T-cell (primary cell): ENCODE measurements at regions of chr16 and their contacts with region 1.

Region 1: DNA sequence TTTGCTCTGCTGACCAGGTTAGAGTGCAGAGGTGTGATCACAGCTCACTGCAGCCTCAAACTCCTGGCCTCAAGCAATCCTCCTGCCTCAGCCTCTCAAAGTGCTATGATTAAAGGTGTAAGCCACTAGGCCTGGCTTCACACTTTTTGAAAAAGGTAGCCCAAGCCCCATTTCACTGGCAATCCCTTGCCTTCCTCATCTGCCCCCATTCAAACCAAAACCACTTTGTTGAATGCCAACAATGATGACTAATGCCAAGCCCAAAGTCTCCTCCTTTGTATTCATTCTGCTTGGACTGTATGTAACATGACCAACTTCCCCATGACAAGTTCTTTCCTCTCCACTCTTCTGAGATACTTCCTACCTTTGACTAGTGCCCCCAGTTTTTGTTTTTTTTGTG is 33.1 kb downstream of the N4BP1 start:
- DNase-seq: no peak
- ATAC-seq: peak in 1 of 4 experiments; percentile 40
- H3K4me3 ChIP-seq: no peak overlapping the region
- H3K4me3 Mint-ChIP-seq: peak overlapping the region in 1 of 3 donors; percentile 49
- H3K27ac ChIP-seq: no peak overlapping the region
- H3K27ac Mint-ChIP-seq: peak overlapping the region; percentile 2 to 29
- H3K4me1 ChIP-seq: peaks cover 17 to 19% of the 10 kb centered on the region in 2 experiments
- H3K4me1 Mint-ChIP-seq: peaks cover 64 to 74% (median 72%) of the 10 kb centered on the region in 3 donors
- H3K27me3 ChIP-seq: no peaks in the 10 kb centered on the region
- H3K27me3 Mint-ChIP-seq: no peaks in the 10 kb centered on the region

Region 2: GRCh38 chr16:48117217-48118105 is 459.5 kb before region 1 on chr16:
- CTCF ChIA-PET with region 1: no interaction called
- POLR2A ChIA-PET with region 1: no interaction called
- DNase-seq: peak in 32 of 35 experiments; percentile 5 to 63 (median 34)
- ATAC-seq: peak; percentile 35 to 61 (median 42)
- H3K4me3 ChIP-seq: no peak overlapping the region
- H3K4me3 Mint-ChIP-seq: no peak overlapping the region
- H3K27ac ChIP-seq: no peak overlapping the region
- H3K27ac Mint-ChIP-seq: no peak overlapping the region
- H3K4me1 ChIP-seq: no peaks in the 10 kb centered on the region
- H3K4me1 Mint-ChIP-seq: no peaks in the 10 kb centered on the region
- H3K27me3 ChIP-seq: peaks cover 0 to 42% of the 10 kb centered on the region in 2 experiments
- H3K27me3 Mint-ChIP-seq: peaks cover 5 to 8% of the 10 kb centered on the region in 2 donors

Region 3: GRCh38 chr16:48478396-48478795 is 98.5 kb before region 1 on chr16:
- CTCF ChIA-PET with region 1: interaction called in 1 of 2 experiments, 10 read pairs
- POLR2A ChIA-PET with region 1: no interaction called
- DNase-seq: no peak
- ATAC-seq: no peak
- H3K4me3 ChIP-seq: no peak overlapping the region
- H3K4me3 Mint-ChIP-seq: no peak overlapping the region
- H3K27ac ChIP-seq: no peak overlapping the region
- H3K27ac Mint-ChIP-seq: no peak overlapping the region
- H3K4me1 ChIP-seq: no peaks in the 10 kb centered on the region
- H3K4me1 Mint-ChIP-seq: peaks cover 0 to under 1% (median 0%) of the 10 kb centered on the region in 3 donors
- H3K27me3 ChIP-seq: no peaks in the 10 kb centered on the region
- H3K27me3 Mint-ChIP-seq: peaks cover 8 to 17% of the 10 kb centered on the region in 2 donors

Region 4: DNA sequence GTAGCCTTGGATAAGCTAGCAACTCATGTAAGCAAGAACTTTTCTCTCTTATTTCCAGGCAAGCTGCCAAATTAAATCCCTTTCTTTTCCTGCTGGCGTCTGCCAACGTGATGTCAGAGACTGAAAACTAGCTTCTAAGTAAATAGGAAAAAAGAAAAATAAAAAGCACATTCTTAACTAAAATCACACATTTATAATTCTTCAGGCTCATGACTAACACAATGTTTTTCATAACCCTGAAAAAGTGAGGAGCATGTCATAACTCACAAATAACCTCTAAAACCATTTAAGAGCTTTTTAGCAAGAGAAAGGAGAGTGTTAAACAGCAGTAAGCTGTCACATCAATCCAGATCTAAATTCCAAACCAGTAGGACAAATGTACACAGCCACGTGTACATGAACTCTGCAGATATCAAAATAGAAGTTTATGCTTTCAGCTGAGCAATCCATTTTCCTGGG is 77.0 kb before region 1 on chr16:
- CTCF ChIA-PET with region 1: no interaction called
- POLR2A ChIA-PET with region 1: no interaction called
- DNase-seq: no peak
- ATAC-seq: no peak
- H3K4me3 ChIP-seq: no peak overlapping the region
- H3K4me3 Mint-ChIP-seq: no peak overlapping the region
- H3K27ac ChIP-seq: no peak overlapping the region
- H3K27ac Mint-ChIP-seq: no peak overlapping the region
- H3K4me1 ChIP-seq: no peaks in the 10 kb centered on the region
- H3K4me1 Mint-ChIP-seq: peaks cover 0 to 1% (median 0%) of the 10 kb centered on the region in 3 donors
- H3K27me3 ChIP-seq: peaks cover 0 to 4% of the 10 kb centered on the region in 2 experiments
- H3K27me3 Mint-ChIP-seq: no peaks in the 10 kb centered on the region

Region 5: GRCh38 chr16:48546774-48547173 is 30.2 kb before region 1 on chr16:
- CTCF ChIA-PET with region 1: no interaction called
- POLR2A ChIA-PET with region 1: no interaction called
- DNase-seq: no peak
- ATAC-seq: no peak
- H3K4me3 ChIP-seq: no peak overlapping the region
- H3K4me3 Mint-ChIP-seq: no peak overlapping the region
- H3K27ac ChIP-seq: no peak overlapping the region
- H3K27ac Mint-ChIP-seq: no peak overlapping the region
- H3K4me1 ChIP-seq: no peaks in the 10 kb centered on the region
- H3K4me1 Mint-ChIP-seq: peaks cover 0 to 4% (median 0%) of the 10 kb centered on the region in 3 donors
- H3K27me3 ChIP-seq: no peaks in the 10 kb centered on the region
- H3K27me3 Mint-ChIP-seq: no peaks in the 10 kb centered on the region

Region 6: DNA sequence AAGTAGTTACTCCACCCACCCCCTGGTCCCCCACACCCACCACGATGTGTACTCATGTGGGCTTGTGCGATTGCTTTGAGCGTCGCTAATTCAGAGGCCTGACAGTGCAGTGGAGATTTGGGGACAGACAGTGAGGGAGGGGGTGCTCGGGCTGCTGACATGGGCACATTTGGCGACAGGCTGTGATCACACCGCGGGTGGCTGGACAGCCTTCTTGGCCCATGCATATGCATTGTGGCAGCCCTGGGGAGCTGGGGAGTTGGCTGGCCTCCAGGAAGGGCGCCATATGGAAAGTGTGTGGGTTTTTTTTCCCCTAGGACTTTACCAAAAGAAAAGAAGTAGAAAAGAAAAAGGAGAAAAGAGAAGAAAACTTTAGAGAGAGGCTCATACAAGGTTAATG is 308.5 kb after region 1 on chr16:
- CTCF ChIA-PET with region 1: no interaction called
- POLR2A ChIA-PET with region 1: no interaction called
- DNase-seq: no peak
- ATAC-seq: no peak
- H3K4me3 ChIP-seq: no peak overlapping the region
- H3K4me3 Mint-ChIP-seq: no peak overlapping the region
- H3K27ac ChIP-seq: no peak overlapping the region
- H3K27ac Mint-ChIP-seq: no peak overlapping the region
- H3K4me1 ChIP-seq: no peaks in the 10 kb centered on the region
- H3K4me1 Mint-ChIP-seq: no peaks in the 10 kb centered on the region
- H3K27me3 ChIP-seq: no peaks in the 10 kb centered on the region
- H3K27me3 Mint-ChIP-seq: no peaks in the 10 kb centered on the region